PC-9 (cell line): ENCODE measurements at regions of chr10 and their contacts with region 1.

Region 1: DNA sequence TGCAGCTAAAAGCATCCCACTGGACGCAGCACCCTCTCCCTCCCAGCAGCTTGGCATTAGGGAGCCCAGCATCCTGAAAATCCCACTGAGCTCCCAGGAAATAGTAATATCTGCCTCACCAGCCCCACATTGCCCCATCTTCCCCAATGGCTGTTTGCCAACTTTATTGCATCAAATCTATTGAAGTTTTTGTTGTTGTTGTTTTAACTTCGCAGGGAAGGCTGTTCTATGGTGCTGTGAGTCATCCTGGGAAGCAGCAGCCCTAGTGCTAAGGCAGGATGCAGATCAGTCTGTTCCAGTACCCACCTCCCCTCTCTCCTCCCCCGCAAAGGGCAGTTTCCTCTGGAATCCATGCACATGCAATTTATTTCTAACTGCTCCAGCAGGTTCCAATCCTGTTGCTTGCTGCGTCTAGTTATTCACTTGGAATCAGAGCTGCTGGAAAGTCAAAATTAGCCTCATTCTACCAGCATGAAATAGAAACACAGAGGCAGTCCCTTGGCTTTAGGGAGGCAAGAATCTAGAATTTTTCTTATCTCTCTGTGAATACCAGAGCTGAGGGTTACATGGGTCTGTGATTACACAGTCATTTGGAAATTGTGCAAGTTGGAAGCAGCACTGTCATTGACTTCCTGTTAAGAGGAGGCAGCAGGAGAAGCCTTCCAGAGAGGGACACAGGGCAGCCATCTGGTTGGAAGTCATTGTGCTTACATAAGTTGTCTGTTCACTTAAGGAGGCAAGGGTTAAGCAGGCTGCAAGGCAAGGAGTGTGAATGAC is 115.9 kb upstream of the CACUL1 start:
- DNase-seq: peak; percentile 60 to 82
- H3K4me3 ChIP-seq: no peak overlapping the region
- H3K27ac ChIP-seq: peak overlapping the region; percentile 82
- H3K4me1 ChIP-seq: peaks cover 46% of the 10 kb centered on the region
- H3K27me3 ChIP-seq: no peaks in the 10 kb centered on the region
- CTCF ChIP-seq: no peak

Region 2: GRCh38 chr10:118447478-118448270 is 423.0 kb before region 1 on chr10:
- CTCF ChIA-PET with region 1: no interaction called
- POLR2A ChIA-PET with region 1: no interaction called
- intact Hi-C with region 1: no loop called
- DNase-seq: peak in 1 of 2 experiments; percentile 3
- H3K4me3 ChIP-seq: no peak overlapping the region
- H3K27ac ChIP-seq: no peak overlapping the region
- H3K4me1 ChIP-seq: no peaks in the 10 kb centered on the region
- H3K27me3 ChIP-seq: no peaks in the 10 kb centered on the region
- CTCF ChIP-seq: no peak

Region 3: DNA sequence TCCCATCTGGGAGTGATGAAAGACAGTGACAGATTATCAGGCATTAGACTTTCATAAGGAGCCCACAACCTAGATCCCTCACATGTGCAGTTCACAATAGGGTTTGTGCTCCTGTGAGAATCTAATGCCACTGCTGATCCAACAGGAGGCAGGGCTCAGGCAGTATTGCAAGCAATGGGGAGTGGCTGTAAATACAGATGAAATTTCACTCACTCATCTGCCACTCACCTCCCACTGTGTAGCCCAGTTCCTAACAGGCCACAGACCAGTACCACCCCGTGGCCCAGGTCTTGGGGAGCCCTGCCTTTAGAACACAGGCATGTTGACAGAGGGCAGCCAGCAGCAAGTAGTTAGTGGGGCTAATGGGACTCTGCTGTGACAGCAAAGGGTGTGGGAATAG is 21.6 kb after region 1 on chr10:
- CTCF ChIA-PET with region 1: interaction called, 16 read pairs
- POLR2A ChIA-PET with region 1: no interaction called
- intact Hi-C with region 1: no loop called
- DNase-seq: no peak
- H3K4me3 ChIP-seq: no peak overlapping the region
- H3K27ac ChIP-seq: no peak overlapping the region
- H3K4me1 ChIP-seq: no peaks in the 10 kb centered on the region
- H3K27me3 ChIP-seq: no peaks in the 10 kb centered on the region
- CTCF ChIP-seq: no peak

Region 4: GRCh38 chr10:118927321-118927720 is 56.7 kb after region 1 on chr10:
- CTCF ChIA-PET with region 1: no interaction called
- POLR2A ChIA-PET with region 1: no interaction called
- intact Hi-C with region 1: no loop called
- DNase-seq: no peak
- H3K4me3 ChIP-seq: no peak overlapping the region
- H3K27ac ChIP-seq: no peak overlapping the region
- H3K4me1 ChIP-seq: no peaks in the 10 kb centered on the region
- H3K27me3 ChIP-seq: no peaks in the 10 kb centered on the region
- CTCF ChIP-seq: no peak

Region 5: GRCh38 chr10:119006451-119007210 is 136.0 kb after region 1 on chr10:
- CTCF ChIA-PET with region 1: no interaction called
- POLR2A ChIA-PET with region 1: no interaction called
- intact Hi-C with region 1: loop called (anchors 5 kb)
- DNase-seq: peak; percentile 60 to 96
- H3K4me3 ChIP-seq: no peak overlapping the region
- H3K27ac ChIP-seq: peak overlapping the region; percentile 53
- H3K4me1 ChIP-seq: peaks cover 38% of the 10 kb centered on the region
- H3K27me3 ChIP-seq: no peaks in the 10 kb centered on the region
- CTCF ChIP-seq: no peak